Panc1 (cell line): ENCODE measurements at regions of chr11 and their contacts with region 1.

Region 1: GRCh38 chr11:107043242-107044006 is 25.1 kb upstream of the GUCY1A2 start:
- DNase-seq: no peak
- ATAC-seq: no peak
- H3K4me3 ChIP-seq: no peak overlapping the region
- H3K27ac ChIP-seq: no peak overlapping the region
- H3K4me1 ChIP-seq: no peaks in the 10 kb centered on the region
- H3K27me3 ChIP-seq: no peaks in the 10 kb centered on the region
- CTCF ChIP-seq: no peak

Region 2: DNA sequence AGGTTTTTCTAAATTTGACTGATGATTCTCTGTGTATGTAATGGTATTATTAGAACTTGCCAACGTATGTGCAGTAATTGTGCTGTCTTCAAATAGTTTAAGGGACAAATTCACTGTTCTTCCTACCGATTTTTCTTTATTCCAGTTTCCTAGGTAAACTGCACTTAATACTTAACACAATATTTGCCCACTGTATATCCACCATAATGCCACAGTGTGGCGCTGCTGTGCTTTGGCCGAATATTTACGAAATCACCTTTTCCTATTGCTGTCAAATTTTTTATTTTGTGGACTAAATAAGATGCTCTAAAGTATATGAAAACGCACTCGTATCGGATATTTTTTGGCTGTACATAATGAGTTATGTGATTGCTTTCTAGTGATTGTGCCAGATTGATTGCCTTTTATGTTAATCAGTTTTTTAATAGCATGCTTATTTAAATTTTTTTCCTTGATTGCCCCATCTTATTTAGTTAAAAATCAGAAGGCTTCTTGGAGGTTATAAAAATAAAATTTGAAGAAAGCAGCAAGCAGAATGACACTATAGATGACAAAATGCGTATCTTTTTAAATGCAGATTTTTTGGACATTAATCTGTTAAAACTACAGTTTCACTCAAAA is 955.5 kb before region 1 on chr11:
- CTCF ChIA-PET with region 1: no interaction called
- POLR2A ChIA-PET with region 1: no interaction called
- in situ Hi-C with region 1: no loop called
- intact Hi-C with region 1: loop called (anchors 5 kb)
- DNase-seq: peak; percentile 32
- ATAC-seq: 0 out of 2 replicates have a peak, but pooled peaks have one; percentile 72
- H3K4me3 ChIP-seq: no peak overlapping the region
- H3K27ac ChIP-seq: peak overlapping the region; percentile 29; the same call in 1 of the 2 replicates
- H3K4me1 ChIP-seq: peaks cover 20% of the 10 kb centered on the region
- H3K27me3 ChIP-seq: no peaks in the 10 kb centered on the region
- CTCF ChIP-seq: peak; percentile 92; the same call in 1 of the 2 replicates

Region 3: DNA sequence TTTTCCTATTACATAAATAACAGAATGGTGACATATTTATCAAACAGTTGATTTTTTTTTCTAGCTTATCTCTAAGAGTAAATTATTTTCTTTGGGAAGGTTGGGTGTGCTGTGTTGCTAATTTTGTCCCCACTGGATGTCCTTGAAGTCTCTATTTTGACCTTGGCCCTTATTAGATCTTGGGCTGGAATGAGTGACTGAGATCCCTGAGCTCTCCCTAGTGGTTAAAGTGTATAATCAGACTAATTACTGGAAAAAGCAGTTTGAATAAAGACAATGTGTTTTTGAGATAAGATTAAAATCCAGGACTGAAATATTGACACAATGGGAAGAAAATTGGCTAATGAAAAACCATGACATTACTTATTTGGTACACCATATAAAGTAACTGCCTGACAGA is 909.9 kb before region 1 on chr11:
- CTCF ChIA-PET with region 1: no interaction called
- POLR2A ChIA-PET with region 1: no interaction called
- in situ Hi-C with region 1: no loop called
- intact Hi-C with region 1: no loop called
- DNase-seq: no peak
- ATAC-seq: no peak
- H3K4me3 ChIP-seq: no peak overlapping the region
- H3K27ac ChIP-seq: no peak overlapping the region
- H3K4me1 ChIP-seq: no peaks in the 10 kb centered on the region; the same call in 1 of the 2 replicates
- H3K27me3 ChIP-seq: peaks cover 1% of the 10 kb centered on the region; the same call in 1 of the 2 replicates
- CTCF ChIP-seq: peak; percentile 54; the same call in 1 of the 2 replicates

Region 4: GRCh38 chr11:106156290-106156937 is 887.0 kb before region 1 on chr11:
- CTCF ChIA-PET with region 1: no interaction called
- POLR2A ChIA-PET with region 1: no interaction called
- in situ Hi-C with region 1: no loop called
- intact Hi-C with region 1: loop called (anchors 5 kb)
- DNase-seq: peak; percentile 28
- ATAC-seq: peak; percentile 82
- H3K4me3 ChIP-seq: no peak overlapping the region
- H3K27ac ChIP-seq: peak overlapping the region; percentile 0; the same call in 1 of the 2 replicates
- H3K4me1 ChIP-seq: no peaks in the 10 kb centered on the region
- H3K27me3 ChIP-seq: no peaks in the 10 kb centered on the region
- CTCF ChIP-seq: peak; percentile 77

Region 5: DNA sequence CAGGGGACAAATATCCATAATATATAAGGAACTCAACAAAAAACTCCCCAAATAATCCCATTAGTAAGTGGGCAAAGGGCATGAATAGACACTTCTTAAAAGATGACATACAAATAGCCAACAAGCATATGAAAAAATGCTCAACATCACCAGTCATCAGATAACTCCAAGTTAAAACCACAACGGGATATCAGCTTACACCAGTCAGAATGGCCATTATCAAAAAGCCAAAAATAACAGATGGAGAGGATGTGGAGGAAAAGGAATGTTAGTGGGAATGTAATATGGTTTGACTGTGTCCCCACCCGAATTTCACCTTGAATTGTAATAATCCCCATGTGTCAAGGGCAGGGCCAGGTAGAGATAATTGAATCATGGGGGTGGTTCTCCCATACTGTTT is 375.3 kb before region 1 on chr11:
- CTCF ChIA-PET with region 1: no interaction called
- POLR2A ChIA-PET with region 1: no interaction called
- in situ Hi-C with region 1: no loop called
- intact Hi-C with region 1: no loop called
- DNase-seq: no peak
- ATAC-seq: no peak
- H3K4me3 ChIP-seq: no peak overlapping the region
- H3K27ac ChIP-seq: no peak overlapping the region
- H3K4me1 ChIP-seq: no peaks in the 10 kb centered on the region
- H3K27me3 ChIP-seq: no peaks in the 10 kb centered on the region
- CTCF ChIP-seq: no peak

Region 6: GRCh38 chr11:106998116-106998915 is 45.1 kb before region 1 on chr11:
- CTCF ChIA-PET with region 1: interaction called, 11 read pairs
- POLR2A ChIA-PET with region 1: no interaction called
- in situ Hi-C with region 1: no loop called
- intact Hi-C with region 1: no loop called
- DNase-seq: no peak
- ATAC-seq: no peak
- H3K4me3 ChIP-seq: no peak overlapping the region
- H3K27ac ChIP-seq: no peak overlapping the region
- H3K4me1 ChIP-seq: no peaks in the 10 kb centered on the region
- H3K27me3 ChIP-seq: no peaks in the 10 kb centered on the region
- CTCF ChIP-seq: no peak